ENCODE measurements at regions of chr14 and their contacts with region 1.

Region 1: GRCh38 chr14:23631702-23632460 is 4.3 kb upstream of the DHRS2 start:
- DNase-seq: peak; percentile 81
- ATAC-seq: peak; percentile 82
- H3K4me3 Mint-ChIP-seq: no peak overlapping the region
- H3K27ac Mint-ChIP-seq: peak overlapping the region; percentile 12
- H3K4me1 Mint-ChIP-seq: peaks cover 35% of the 10 kb centered on the region
- H3K27me3 Mint-ChIP-seq: peaks cover 1% of the 10 kb centered on the region

Region 2: DNA sequence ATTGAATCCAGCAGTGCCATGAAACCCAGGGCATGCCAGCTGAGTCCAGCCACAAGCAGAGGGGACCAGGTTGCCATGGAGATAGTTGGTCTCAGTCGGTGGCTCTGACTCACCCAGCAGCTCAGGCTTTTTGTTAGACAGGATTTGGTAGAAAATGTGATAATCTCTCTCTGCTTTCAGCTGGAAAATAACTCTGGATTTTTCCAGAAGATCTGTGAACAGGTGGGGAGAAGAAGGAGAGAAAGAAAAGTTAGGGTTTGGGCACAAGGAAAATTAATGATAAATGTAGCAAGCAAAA is 201.1 kb before region 1 on chr14:
- CTCF ChIA-PET with region 1: no interaction called
- DNase-seq: no peak
- ATAC-seq: peak; percentile 49
- H3K4me3 Mint-ChIP-seq: no peak overlapping the region
- H3K27ac Mint-ChIP-seq: no peak overlapping the region
- H3K4me1 Mint-ChIP-seq: peaks cover 16% of the 10 kb centered on the region
- H3K27me3 Mint-ChIP-seq: no peaks in the 10 kb centered on the region

Region 3: GRCh38 chr14:23487216-23487615 is 144.7 kb before region 1 on chr14:
- CTCF ChIA-PET with region 1: no interaction called
- DNase-seq: no peak
- ATAC-seq: no peak
- H3K4me3 Mint-ChIP-seq: no peak overlapping the region
- H3K27ac Mint-ChIP-seq: no peak overlapping the region
- H3K4me1 Mint-ChIP-seq: no peaks in the 10 kb centered on the region
- H3K27me3 Mint-ChIP-seq: no peaks in the 10 kb centered on the region

Region 4: GRCh38 chr14:23605931-23606585 is 25.8 kb before region 1 on chr14:
- CTCF ChIA-PET with region 1: interaction called, 86 read pairs
- DNase-seq: peak; percentile 51
- ATAC-seq: peak; percentile 79
- H3K4me3 Mint-ChIP-seq: peak overlapping the region; percentile 1
- H3K27ac Mint-ChIP-seq: peak overlapping the region; percentile 88
- H3K4me1 Mint-ChIP-seq: peaks cover 60% of the 10 kb centered on the region
- H3K27me3 Mint-ChIP-seq: no peaks in the 10 kb centered on the region

Region 5: GRCh38 chr14:23621204-23621931 is 10.5 kb before region 1 on chr14:
- CTCF ChIA-PET with region 1: interaction called, 24 read pairs
- DNase-seq: no peak
- ATAC-seq: no peak
- H3K4me3 Mint-ChIP-seq: no peak overlapping the region
- H3K27ac Mint-ChIP-seq: no peak overlapping the region
- H3K4me1 Mint-ChIP-seq: peaks cover 3% of the 10 kb centered on the region
- H3K27me3 Mint-ChIP-seq: peaks cover 11% of the 10 kb centered on the region

Region 6: GRCh38 chr14:23660290-23661226 is 28.7 kb after region 1 on chr14:
- CTCF ChIA-PET with region 1: interaction called, 42 read pairs
- DNase-seq: peak; percentile 84
- ATAC-seq: peak; percentile 99
- H3K4me3 Mint-ChIP-seq: no peak overlapping the region
- H3K27ac Mint-ChIP-seq: peak overlapping the region; percentile 52
- H3K4me1 Mint-ChIP-seq: peaks cover 25% of the 10 kb centered on the region
- H3K27me3 Mint-ChIP-seq: peaks cover 3% of the 10 kb centered on the region

Region 7: GRCh38 chr14:23910101-23910875 is 278.4 kb after region 1 on chr14:
- CTCF ChIA-PET with region 1: interaction called, 19 read pairs
- DNase-seq: no peak
- ATAC-seq: no peak
- H3K4me3 Mint-ChIP-seq: no peak overlapping the region
- H3K27ac Mint-ChIP-seq: no peak overlapping the region
- H3K4me1 Mint-ChIP-seq: peaks cover 2% of the 10 kb centered on the region
- H3K27me3 Mint-ChIP-seq: peaks cover 19% of the 10 kb centered on the region

Region 8: DNA sequence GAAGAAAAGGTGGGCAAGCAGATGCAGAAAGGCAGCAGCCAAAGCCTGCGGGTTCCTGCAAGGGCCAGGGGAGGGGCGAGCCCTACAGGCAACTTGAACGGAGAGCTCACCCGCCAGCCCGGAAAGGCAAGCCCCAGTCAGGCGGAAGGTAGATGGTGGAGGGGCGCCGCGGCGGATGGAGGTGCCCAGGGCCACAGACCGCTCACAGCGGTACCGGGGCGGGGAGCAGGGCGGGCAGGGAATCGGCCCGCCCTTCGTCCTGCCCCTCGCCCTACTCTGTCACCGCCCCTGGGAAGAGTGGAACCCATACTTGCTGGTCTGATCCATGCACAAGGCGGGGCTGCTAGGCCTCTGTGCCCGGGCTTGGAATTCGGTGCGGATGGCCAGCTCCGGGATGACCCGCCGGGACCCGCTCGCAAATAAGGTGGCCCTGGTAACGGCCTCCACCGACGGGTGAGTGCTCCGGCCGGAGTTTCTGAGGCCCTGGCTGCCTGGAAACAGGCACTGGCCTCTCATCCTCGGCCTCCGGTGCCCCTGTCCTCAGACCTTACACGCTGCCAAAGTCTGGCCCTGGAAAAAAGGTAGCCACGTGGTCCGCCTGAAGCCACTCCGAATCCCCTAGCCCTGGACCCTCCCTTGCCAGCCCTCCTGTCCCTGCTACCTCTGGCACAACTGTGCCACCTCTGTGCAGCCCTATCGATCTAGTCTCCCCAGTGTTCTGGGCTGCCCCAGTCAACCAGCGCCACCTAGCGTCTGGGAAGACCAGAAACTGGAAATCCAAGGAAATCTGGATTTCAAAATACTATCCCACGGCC is 321.8 kb after region 1 on chr14 and contains the start of gene DHRS4:
- CTCF ChIA-PET with region 1: interaction called, 14 read pairs
- DNase-seq: peak; percentile 92
- ATAC-seq: peak; percentile 98
- H3K4me3 Mint-ChIP-seq: peak within 1 kb of the TSS; percentile 88
- H3K27ac Mint-ChIP-seq: peak within 1 kb of the TSS; percentile 88
- H3K4me1 Mint-ChIP-seq: peaks cover 25% of the 10 kb centered on the region
- H3K27me3 Mint-ChIP-seq: no peaks in the 10 kb centered on the region
- total RNA-seq, gene DHRS4: 15.5 to 20.7 TPM

Measured in activated CD8-positive, alpha-beta memory T cell treated with anti-CD3 and anti-CD28 coated beads, Interleukin-2, amount 10 ng/mL, durations not matched to agents 7 days and 5 days (primary cell).